ENCODE measurements at regions of chr6 and their contacts with region 1.

Region 1: DNA sequence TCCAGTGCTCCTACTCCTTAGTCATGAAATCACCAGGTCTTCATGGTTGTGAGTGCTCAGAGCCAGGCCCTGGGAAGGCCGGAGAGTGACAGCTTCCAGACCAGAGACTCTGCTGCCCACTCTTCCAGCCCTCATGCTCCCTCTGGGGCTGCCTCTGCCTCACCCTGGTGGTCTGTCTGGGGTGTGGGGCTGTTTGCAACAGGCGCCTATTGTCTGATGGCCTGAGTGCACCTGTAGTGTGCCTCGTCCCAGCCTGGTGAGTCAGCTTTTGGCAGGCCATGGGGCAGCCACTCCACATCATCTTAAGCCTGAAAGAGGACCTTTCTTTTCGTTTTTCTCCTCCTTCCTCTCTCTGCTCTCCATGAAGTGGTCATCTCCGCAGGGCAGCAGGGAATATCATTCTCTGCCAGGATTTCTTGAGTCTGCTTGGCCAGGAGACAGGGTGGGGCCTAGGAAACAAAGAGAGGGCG is 173.8 kb downstream of the VEGFA start:
- DNase-seq: no peak
- ATAC-seq: no peak
- H3K4me3 ChIP-seq: no peak overlapping the region
- H3K4me3 Mint-ChIP-seq: no peak overlapping the region
- H3K27ac ChIP-seq: no peak overlapping the region
- H3K27ac Mint-ChIP-seq: no peak overlapping the region
- H3K4me1 ChIP-seq: no peaks in the 10 kb centered on the region
- H3K4me1 Mint-ChIP-seq: no peaks in the 10 kb centered on the region
- H3K27me3 ChIP-seq: no peaks in the 10 kb centered on the region
- H3K27me3 Mint-ChIP-seq: no peaks in the 10 kb centered on the region
- CTCF ChIP-seq: no peak

Region 2: DNA sequence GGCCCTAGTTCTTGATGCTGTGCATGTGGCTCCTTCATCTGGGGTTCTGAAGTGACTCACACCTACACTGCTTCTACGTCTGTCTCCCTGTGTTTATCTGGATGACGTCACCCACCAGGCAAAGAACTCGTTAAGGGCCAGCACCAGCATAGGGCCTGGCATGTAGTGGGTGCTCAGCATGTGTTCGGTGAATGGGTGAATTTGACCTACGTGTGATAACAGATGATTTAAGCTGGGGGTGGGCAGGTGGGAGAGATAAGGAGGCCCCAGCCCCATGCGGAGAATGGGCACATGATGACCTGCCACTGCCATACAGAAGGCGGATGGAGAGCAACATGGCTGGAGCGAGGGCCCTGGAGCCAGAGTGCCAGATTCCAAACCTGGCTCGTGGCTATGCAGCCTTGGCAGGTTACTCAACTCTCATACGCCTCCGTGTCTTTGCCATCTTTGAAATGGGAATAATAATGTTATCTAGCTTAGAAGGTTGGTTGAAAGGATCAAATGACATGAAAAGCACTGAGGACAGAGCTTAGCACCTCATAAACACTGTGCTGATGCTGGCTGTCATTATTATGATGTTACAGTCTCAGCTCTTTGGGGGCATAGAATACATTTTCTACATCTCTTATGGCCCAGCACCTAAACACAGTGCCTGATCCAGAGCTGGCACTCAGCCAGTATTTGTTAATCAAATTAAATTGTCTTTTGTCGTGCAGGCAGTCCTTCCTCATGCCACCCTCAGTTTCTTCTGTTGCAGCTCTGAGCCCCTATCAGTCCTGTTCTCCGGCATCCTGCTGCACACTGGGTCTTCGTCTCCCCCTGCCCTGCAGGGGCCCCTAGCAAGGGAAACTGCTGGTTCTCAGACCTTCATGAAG is 134.2 kb before region 1 on chr6:
- CTCF ChIA-PET with region 1: no interaction called
- POLR2A ChIA-PET with region 1: no interaction called
- intact Hi-C with region 1: no loop called
- DNase-seq: no peak
- ATAC-seq: no peak
- H3K4me3 ChIP-seq: no peak overlapping the region
- H3K4me3 Mint-ChIP-seq: no peak overlapping the region
- H3K27ac ChIP-seq: no peak overlapping the region
- H3K27ac Mint-ChIP-seq: no peak overlapping the region
- H3K4me1 ChIP-seq: peaks cover 4% of the 10 kb centered on the region
- H3K4me1 Mint-ChIP-seq: no peaks in the 10 kb centered on the region
- H3K27me3 ChIP-seq: no peaks in the 10 kb centered on the region
- H3K27me3 Mint-ChIP-seq: no peaks in the 10 kb centered on the region
- CTCF ChIP-seq: no peak

Region 3: GRCh38 chr6:43964659-43965570 is 21.1 kb after region 1 on chr6:
- CTCF ChIA-PET with region 1: no interaction called
- POLR2A ChIA-PET with region 1: no interaction called
- intact Hi-C with region 1: loop called in 1 of 2 experiments (anchors 1 kb)
- DNase-seq: no peak
- ATAC-seq: no peak
- H3K4me3 ChIP-seq: no peak overlapping the region
- H3K4me3 Mint-ChIP-seq: no peak overlapping the region
- H3K27ac ChIP-seq: no peak overlapping the region
- H3K27ac Mint-ChIP-seq: no peak overlapping the region
- H3K4me1 ChIP-seq: no peaks in the 10 kb centered on the region
- H3K4me1 Mint-ChIP-seq: no peaks in the 10 kb centered on the region
- H3K27me3 ChIP-seq: no peaks in the 10 kb centered on the region
- H3K27me3 Mint-ChIP-seq: peaks cover 13% of the 10 kb centered on the region
- CTCF ChIP-seq: no peak

Region 4: DNA sequence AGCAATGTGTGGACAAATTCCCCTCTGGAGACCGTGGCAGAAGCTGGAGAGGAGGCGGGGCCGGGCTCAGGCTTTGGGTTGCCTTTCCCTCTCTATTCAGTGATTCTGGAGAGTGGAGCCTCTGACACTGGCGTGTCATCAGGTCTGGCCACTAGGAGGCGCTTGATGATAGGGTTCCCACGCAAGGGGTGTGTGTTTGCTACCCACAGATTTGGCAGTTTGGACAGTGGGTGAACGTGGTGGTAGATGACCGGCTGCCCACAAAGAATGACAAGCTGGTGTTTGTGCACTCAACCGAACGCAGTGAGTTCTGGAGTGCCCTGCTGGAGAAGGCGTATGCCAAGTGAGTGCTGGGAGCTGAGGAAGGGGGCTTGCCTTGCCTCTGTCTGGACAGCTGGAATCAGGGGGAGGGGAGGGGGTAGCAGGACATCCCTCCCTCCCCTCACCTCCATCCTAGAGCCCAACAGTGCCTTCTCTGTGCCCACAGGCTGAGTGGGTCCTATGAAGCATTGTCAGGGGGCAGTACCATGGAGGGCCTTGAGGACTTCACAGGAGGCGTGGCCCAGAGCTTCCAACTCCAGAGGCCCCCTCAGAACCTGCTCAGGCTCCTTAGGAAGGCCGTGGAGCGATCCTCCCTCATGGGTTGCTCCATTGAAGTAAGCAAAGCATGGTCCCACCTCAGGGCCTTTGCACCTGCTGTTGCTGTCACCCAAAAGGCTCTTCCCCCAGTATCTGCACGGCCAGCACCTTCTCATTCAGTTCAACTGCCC is 229.1 kb after region 1 on chr6:
- CTCF ChIA-PET with region 1: no interaction called
- POLR2A ChIA-PET with region 1: no interaction called
- intact Hi-C with region 1: no loop called
- DNase-seq: peak; percentile 62 to 84 (median 72)
- ATAC-seq: peak; percentile 89
- H3K4me3 ChIP-seq: no peak overlapping the region
- H3K4me3 Mint-ChIP-seq: peak overlapping the region; percentile 23
- H3K27ac ChIP-seq: no peak overlapping the region
- H3K27ac Mint-ChIP-seq: no peak overlapping the region
- H3K4me1 ChIP-seq: peaks cover 13% of the 10 kb centered on the region
- H3K4me1 Mint-ChIP-seq: peaks cover 18% of the 10 kb centered on the region
- H3K27me3 ChIP-seq: peaks cover 5 to 16% of the 10 kb centered on the region in 2 experiments
- H3K27me3 Mint-ChIP-seq: no peaks in the 10 kb centered on the region
- CTCF ChIP-seq: peak; percentile 90

Region 5: GRCh38 chr6:45697605-45698004 is 1753.8 kb after region 1 on chr6:
- CTCF ChIA-PET with region 1: no interaction called
- POLR2A ChIA-PET with region 1: no interaction called
- intact Hi-C with region 1: no loop called
- DNase-seq: no peak
- ATAC-seq: no peak
- H3K4me3 ChIP-seq: no peak overlapping the region
- H3K4me3 Mint-ChIP-seq: no peak overlapping the region
- H3K27ac ChIP-seq: no peak overlapping the region
- H3K27ac Mint-ChIP-seq: no peak overlapping the region
- H3K4me1 ChIP-seq: no peaks in the 10 kb centered on the region
- H3K4me1 Mint-ChIP-seq: no peaks in the 10 kb centered on the region
- H3K27me3 ChIP-seq: no peaks in the 10 kb centered on the region
- H3K27me3 Mint-ChIP-seq: no peaks in the 10 kb centered on the region
- CTCF ChIP-seq: no peak